Cardiac septum (tissue), 1 donor: ENCODE measurements at regions of chr19 and their contacts with region 1.

Region 1: GRCh38 chr19:13861732-13862531 is 15.0 kb upstream of the NANOS3 start:
- DNase-seq: peak; percentile 98

Region 2: GRCh38 chr19:13277104-13277809 is 584.7 kb before region 1 on chr19:
- intact Hi-C with region 1: loop called (anchors 10 kb)
- DNase-seq: no peak

Region 3: DNA sequence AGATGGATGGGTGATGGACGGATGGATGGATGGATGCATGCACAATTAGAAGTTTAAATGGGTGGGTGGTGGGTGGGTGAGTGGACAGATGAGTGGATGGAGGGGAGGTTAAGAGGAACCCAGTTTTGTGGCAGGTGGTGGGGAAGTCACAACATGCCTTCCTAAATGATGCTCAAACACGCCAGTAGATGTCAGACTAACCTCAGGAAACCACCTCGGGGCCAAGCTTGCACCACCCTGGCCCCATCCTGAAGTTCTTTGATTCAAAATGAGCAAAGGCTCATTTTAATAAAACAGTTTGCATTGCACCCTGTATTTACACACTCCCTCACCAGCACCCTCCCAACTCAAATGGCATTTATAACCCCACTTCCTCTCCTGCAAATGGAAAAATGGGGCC is 264.3 kb before region 1 on chr19:
- intact Hi-C with region 1: loop called (anchors 5 kb)
- DNase-seq: no peak

Region 4: GRCh38 chr19:13764101-13764807 is 97.7 kb before region 1 on chr19 and contains the start of gene MRI1:
- intact Hi-C with region 1: no loop called
- DNase-seq: peak; percentile 89
- total RNA-seq, gene MRI1: 15.4 TPM

Region 5: DNA sequence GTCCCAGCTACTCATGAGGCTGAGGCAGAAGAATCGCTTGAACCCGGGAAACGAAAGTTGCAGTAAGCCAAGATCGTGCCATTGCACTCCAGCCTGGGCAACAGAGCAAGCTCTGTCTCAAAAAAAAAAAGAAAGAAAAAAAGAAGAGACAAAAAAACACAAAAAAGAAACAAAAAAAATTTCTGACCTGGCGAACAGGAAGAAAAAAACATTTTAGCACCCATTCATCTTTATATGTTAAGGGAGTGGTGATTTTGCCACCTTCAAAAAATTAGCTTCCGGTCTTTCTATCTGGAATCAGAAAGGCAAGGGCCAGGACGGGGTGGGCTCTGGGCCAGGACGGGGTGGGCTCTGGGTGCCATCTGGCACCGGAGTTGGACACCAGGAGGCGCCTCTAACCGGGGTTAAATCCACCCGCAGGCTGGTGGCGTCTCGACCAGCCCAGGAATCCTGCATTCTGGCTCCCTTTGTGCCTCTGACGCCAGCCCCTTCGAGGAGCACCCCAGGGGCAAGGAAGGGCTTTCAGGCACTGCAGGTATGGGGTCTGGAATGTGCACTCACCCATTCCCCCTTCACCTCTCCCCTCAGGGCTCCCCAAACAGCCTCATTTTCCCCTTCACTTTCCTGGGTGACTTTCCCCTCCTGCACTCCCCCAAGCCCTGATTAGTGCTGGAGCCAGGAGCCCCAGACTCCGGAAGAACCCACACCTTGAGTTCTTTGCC is 77.0 kb before region 1 on chr19:
- intact Hi-C with region 1: loop called (anchors 1 kb)
- DNase-seq: peak; percentile 87